ENCODE measurements at regions of chr3 and their contacts with region 1.

Region 1: GRCh38 chr3:117526470-117527079 is 817.0 kb downstream of the TUSC7 start:
- ATAC-seq: peak in 3 of 8 experiments; percentile 29 to 60 (median 40)
- H3K4me3 ChIP-seq: no peak overlapping the region
- H3K27ac ChIP-seq: no peak overlapping the region
- H3K4me1 ChIP-seq: peaks cover 4 to 15% of the 10 kb centered on the region in 2 donors

Region 2: GRCh38 chr3:115937054-115937453 is 1589.5 kb before region 1 on chr3:
- in situ Hi-C with region 1: no loop called
- ATAC-seq: no peak
- H3K4me3 ChIP-seq: no peak overlapping the region
- H3K27ac ChIP-seq: no peak overlapping the region
- H3K4me1 ChIP-seq: no peaks in the 10 kb centered on the region

Region 3: DNA sequence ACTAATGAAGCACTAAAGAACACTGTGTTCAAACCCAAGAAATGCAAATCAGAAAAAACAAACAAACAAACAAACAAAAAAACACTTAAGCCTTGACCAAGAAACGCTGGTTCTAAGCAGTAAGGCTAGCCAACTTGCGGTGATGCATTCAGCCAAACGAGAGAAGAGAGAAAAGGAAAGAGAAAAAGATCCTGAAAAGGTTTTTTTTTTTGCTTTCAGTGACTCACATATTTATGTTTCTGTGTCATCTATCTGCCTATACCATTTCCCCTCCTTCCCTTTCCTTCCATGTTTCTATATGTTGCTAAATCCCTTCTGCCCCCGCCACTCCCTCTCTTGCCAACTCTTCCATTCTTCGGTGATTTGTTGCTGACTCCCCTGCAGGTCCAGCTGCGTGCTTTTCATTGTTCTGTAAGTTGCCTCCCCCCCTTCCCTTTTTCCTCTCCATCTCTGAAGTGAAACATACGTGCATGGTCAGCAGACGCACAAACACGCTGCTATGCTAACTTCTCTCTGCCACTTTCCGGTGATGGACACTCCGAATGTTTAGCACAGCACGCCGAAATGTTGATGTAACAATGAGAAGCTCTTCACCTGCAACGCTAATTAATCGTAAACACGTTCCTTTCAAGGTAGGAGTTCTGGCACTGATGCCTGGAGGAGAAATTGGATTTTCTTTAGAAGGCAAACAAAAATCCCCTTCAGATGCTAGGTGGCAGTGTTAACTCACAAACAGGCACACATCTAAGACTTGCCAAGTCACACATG is 662.6 kb before region 1 on chr3:
- in situ Hi-C with region 1: loop called in 1 of 9 experiments (anchors 25 kb)
- ATAC-seq: peak; percentile 72 to 84 (median 80)
- H3K4me3 ChIP-seq: peak overlapping the region; percentile 20 to 36 (median 23)
- H3K27ac ChIP-seq: no peak overlapping the region
- H3K4me1 ChIP-seq: peaks cover 13 to 31% of the 10 kb centered on the region in 2 donors

Region 4: GRCh38 chr3:117036259-117036799 is 490.2 kb before region 1 on chr3:
- in situ Hi-C with region 1: loop called in 1 of 9 experiments (anchors 25 kb)
- ATAC-seq: peak in 4 of 8 experiments; percentile 42 to 73 (median 62)
- H3K4me3 ChIP-seq: no peak overlapping the region
- H3K27ac ChIP-seq: no peak overlapping the region
- H3K4me1 ChIP-seq: peaks cover 18% of the 10 kb centered on the region in 2 donors

Region 5: DNA sequence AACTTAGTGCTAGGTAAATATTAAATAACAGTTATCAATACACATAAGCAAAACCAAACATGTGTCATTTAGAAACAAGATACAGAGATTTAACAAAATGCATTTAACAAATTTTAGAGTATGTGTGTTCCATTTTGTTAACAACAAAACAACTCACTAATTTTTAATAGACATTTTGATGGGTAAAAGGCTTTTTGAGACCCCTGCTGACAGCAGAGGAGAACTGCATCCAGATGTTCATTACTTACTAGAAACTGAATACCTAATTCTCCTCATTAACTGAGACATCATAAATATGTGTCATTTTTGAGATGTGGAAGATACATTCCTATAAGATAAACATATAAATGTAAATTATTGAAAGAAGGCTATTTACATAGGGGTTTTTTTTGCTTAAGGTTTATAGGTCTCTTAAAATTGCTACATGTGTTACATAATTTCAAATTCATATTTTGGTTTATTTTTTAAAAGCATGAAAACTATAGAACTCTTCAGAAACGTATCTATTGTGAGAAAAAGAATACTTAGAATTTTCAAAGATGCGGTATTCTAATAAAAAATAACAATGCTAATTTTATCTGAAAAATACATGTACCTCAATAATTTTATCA is 192.8 kb after region 1 on chr3:
- in situ Hi-C with region 1: loop called in 1 of 9 experiments (anchors 25 kb)
- ATAC-seq: no peak
- H3K4me3 ChIP-seq: no peak overlapping the region
- H3K27ac ChIP-seq: no peak overlapping the region
- H3K4me1 ChIP-seq: peaks cover 0 to 3% of the 10 kb centered on the region in 2 donors